Naive thymus-derived CD4-positive, alpha-beta T cell (primary cell): ENCODE measurements at regions of chr10 and their contacts with region 1.

Region 1: DNA sequence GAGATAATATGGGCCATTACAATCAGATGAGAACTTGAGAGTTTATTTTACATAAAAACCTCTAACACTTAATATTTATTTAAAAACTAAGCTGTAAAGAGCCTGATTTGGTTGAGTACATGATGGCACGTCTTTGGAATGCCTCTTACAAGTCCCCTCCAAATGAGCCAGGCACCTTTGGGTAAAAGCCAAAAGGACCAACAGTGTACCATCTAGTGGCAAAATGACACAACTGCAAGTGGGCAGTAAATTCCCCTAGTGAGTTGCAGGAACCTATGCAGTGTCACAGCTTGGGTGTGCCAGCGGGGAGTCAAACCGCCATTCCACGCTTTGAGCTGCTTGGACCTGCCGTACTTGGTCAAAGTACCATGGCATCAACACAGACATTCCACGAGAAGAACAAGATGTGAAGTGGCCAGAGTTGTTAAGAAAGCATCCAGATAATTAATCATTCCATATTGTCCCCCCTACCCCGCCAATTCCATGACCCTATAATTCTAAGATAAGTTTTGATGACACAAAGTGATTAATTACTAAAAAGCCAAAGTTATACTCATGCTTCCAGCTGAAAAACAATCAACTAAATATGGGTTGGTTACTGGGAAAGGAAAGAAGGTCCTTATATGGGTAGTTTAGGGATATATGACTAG is 115.2 kb downstream of the SORBS1 start:
- DNase-seq: peak in 5 of 9 donors; percentile 9 to 29 (median 12)
- ATAC-seq: peak; percentile 78
- H3K4me3 ChIP-seq: no peak overlapping the region
- H3K4me3 Mint-ChIP-seq: no peak overlapping the region
- H3K27ac ChIP-seq: no peak overlapping the region
- H3K27ac Mint-ChIP-seq: no peak overlapping the region
- H3K4me1 ChIP-seq: no peaks in the 10 kb centered on the region
- H3K4me1 Mint-ChIP-seq: peaks cover 0 to 6% (median 0%) of the 10 kb centered on the region in 7 donors
- H3K27me3 ChIP-seq: no peaks in the 10 kb centered on the region
- H3K27me3 Mint-ChIP-seq: peaks cover 0 to 38% (median 5%) of the 10 kb centered on the region in 5 donors

Region 2: GRCh38 chr10:95133016-95133752 is 312.8 kb before region 1 on chr10:
- CTCF ChIA-PET with region 1: no interaction called
- POLR2A ChIA-PET with region 1: no interaction called
- intact Hi-C with region 1: loop called in 1 of 2 experiments (anchors 5 kb)
- DNase-seq: peak in 8 of 9 donors; percentile 22 to 74 (median 48)
- ATAC-seq: peak; percentile 67
- H3K4me3 ChIP-seq: no peak overlapping the region
- H3K4me3 Mint-ChIP-seq: no peak overlapping the region
- H3K27ac ChIP-seq: no peak overlapping the region
- H3K27ac Mint-ChIP-seq: no peak overlapping the region
- H3K4me1 ChIP-seq: no peaks in the 10 kb centered on the region
- H3K4me1 Mint-ChIP-seq: no peaks in the 10 kb centered on the region
- H3K27me3 ChIP-seq: no peaks in the 10 kb centered on the region
- H3K27me3 Mint-ChIP-seq: peaks cover 0 to 9% (median 0%) of the 10 kb centered on the region in 5 donors

Region 3: GRCh38 chr10:95374597-95375209 is 71.3 kb before region 1 on chr10:
- CTCF ChIA-PET with region 1: no interaction called
- POLR2A ChIA-PET with region 1: no interaction called
- intact Hi-C with region 1: loop called in 1 of 2 experiments (anchors 1 kb)
- DNase-seq: peak in 4 of 9 donors; percentile 8 to 70 (median 15)
- ATAC-seq: peak; percentile 89
- H3K4me3 ChIP-seq: no peak overlapping the region
- H3K4me3 Mint-ChIP-seq: no peak overlapping the region
- H3K27ac ChIP-seq: no peak overlapping the region
- H3K27ac Mint-ChIP-seq: no peak overlapping the region
- H3K4me1 ChIP-seq: no peaks in the 10 kb centered on the region
- H3K4me1 Mint-ChIP-seq: peaks cover 0 to 6% (median 4%) of the 10 kb centered on the region in 7 donors
- H3K27me3 ChIP-seq: no peaks in the 10 kb centered on the region
- H3K27me3 Mint-ChIP-seq: peaks cover 8 to 56% (median 17%) of the 10 kb centered on the region in 5 donors

Region 4: GRCh38 chr10:95430231-95430951 is 15.6 kb before region 1 on chr10:
- CTCF ChIA-PET with region 1: interaction called, 11 read pairs
- POLR2A ChIA-PET with region 1: no interaction called
- intact Hi-C with region 1: loop called in 1 of 2 experiments (anchors 2 kb)
- DNase-seq: peak in 8 of 9 donors; percentile 14 to 52 (median 34)
- ATAC-seq: peak; percentile 89
- H3K4me3 ChIP-seq: no peak overlapping the region
- H3K4me3 Mint-ChIP-seq: no peak overlapping the region
- H3K27ac ChIP-seq: no peak overlapping the region
- H3K27ac Mint-ChIP-seq: no peak overlapping the region
- H3K4me1 ChIP-seq: no peaks in the 10 kb centered on the region
- H3K4me1 Mint-ChIP-seq: peaks cover 0 to 2% (median 0%) of the 10 kb centered on the region in 7 donors
- H3K27me3 ChIP-seq: no peaks in the 10 kb centered on the region
- H3K27me3 Mint-ChIP-seq: peaks cover 0 to 3% (median 0%) of the 10 kb centered on the region in 5 donors

Region 5: DNA sequence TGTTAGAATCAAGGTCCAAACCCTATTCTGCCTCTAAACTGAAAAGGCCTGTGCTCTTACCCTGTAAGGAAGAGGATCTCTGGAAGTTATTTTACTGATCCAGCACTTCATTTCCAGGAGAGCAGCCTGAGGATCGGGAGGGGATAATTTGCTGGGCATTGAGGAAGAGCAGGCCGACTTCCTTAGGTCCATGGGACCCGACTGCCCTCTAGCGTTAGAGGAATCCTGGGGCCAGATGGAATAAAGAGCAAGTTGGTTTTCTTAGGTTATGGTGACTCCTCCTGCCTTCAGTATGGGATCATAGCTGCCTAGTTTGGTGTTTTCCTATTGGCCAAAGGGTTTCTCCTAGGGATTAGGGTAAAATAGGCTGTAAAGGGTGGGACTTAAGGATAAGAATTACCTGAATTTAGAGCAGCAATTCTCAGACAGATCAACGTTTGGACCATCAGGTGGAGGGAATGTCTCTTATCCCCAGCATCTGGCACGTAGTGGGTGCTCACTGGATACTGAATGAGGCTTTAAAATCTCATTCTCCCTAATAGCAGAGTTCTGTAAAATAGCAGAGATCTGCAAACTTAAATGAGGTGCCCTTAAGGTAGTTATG is 155.3 kb after region 1 on chr10:
- CTCF ChIA-PET with region 1: no interaction called
- POLR2A ChIA-PET with region 1: no interaction called
- intact Hi-C with region 1: loop called in 1 of 2 experiments (anchors 5 kb)
- DNase-seq: peak in 8 of 9 donors; percentile 2 to 44 (median 28)
- ATAC-seq: peak; percentile 58
- H3K4me3 ChIP-seq: no peak overlapping the region
- H3K4me3 Mint-ChIP-seq: no peak overlapping the region
- H3K27ac ChIP-seq: no peak overlapping the region
- H3K27ac Mint-ChIP-seq: no peak overlapping the region
- H3K4me1 ChIP-seq: no peaks in the 10 kb centered on the region
- H3K4me1 Mint-ChIP-seq: peaks cover 0 to 4% (median 0%) of the 10 kb centered on the region in 7 donors
- H3K27me3 ChIP-seq: no peaks in the 10 kb centered on the region
- H3K27me3 Mint-ChIP-seq: peaks cover 0 to 8% (median 5%) of the 10 kb centered on the region in 5 donors

Region 6: DNA sequence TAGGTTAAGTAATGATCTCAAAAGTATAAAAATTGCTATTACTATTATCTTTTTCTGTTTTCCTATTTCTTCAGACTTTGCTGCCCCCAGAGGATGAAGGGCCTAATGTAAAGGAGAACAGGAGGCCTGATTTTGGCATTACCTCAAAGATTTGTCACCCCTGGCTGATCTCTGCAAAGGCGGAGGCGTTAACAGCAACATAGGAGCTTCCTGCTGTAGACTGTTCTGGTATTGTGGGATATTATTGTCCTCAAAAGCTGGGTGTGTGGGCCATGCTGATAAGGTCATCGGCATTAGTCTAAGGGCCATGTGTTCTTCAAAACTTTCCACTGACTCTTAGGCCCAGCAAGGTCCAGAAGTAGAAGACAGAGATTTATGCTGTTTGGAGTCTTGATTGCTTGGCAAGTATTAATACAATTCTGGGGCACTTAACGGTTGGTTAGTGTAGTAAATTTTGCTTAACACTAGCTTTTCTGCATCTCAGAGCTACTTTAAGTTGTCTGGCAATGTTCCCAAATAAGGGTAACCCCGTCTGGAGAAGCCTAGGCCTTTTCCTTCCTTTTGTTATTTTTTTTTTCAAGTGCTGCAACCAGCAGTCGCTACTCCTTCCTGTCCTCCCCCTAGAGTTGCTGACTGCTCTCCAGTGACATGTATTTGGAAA is 296.0 kb after region 1 on chr10:
- CTCF ChIA-PET with region 1: no interaction called
- POLR2A ChIA-PET with region 1: no interaction called
- intact Hi-C with region 1: no loop called
- DNase-seq: no peak
- ATAC-seq: no peak
- H3K4me3 ChIP-seq: no peak overlapping the region
- H3K4me3 Mint-ChIP-seq: no peak overlapping the region
- H3K27ac ChIP-seq: no peak overlapping the region
- H3K27ac Mint-ChIP-seq: no peak overlapping the region
- H3K4me1 ChIP-seq: no peaks in the 10 kb centered on the region
- H3K4me1 Mint-ChIP-seq: peaks cover 0 to 21% (median 4%) of the 10 kb centered on the region in 7 donors
- H3K27me3 ChIP-seq: no peaks in the 10 kb centered on the region
- H3K27me3 Mint-ChIP-seq: peaks cover 4 to 24% (median 7%) of the 10 kb centered on the region in 5 donors

Region 7: GRCh38 chr10:96803318-96803664 is 1357.3 kb after region 1 on chr10:
- CTCF ChIA-PET with region 1: no interaction called
- POLR2A ChIA-PET with region 1: no interaction called
- intact Hi-C with region 1: no loop called
- DNase-seq: no peak
- ATAC-seq: no peak
- H3K4me3 ChIP-seq: no peak overlapping the region
- H3K4me3 Mint-ChIP-seq: no peak overlapping the region
- H3K27ac ChIP-seq: no peak overlapping the region
- H3K27ac Mint-ChIP-seq: no peak overlapping the region
- H3K4me1 ChIP-seq: no peaks in the 10 kb centered on the region
- H3K4me1 Mint-ChIP-seq: peaks cover 0 to 6% (median 0%) of the 10 kb centered on the region in 7 donors
- H3K27me3 ChIP-seq: no peaks in the 10 kb centered on the region
- H3K27me3 Mint-ChIP-seq: peaks cover 9 to 16% (median 12%) of the 10 kb centered on the region in 5 donors